Natural killer cell (primary cell): ENCODE measurements at regions of chr7 and their contacts with region 1.

Region 1: DNA sequence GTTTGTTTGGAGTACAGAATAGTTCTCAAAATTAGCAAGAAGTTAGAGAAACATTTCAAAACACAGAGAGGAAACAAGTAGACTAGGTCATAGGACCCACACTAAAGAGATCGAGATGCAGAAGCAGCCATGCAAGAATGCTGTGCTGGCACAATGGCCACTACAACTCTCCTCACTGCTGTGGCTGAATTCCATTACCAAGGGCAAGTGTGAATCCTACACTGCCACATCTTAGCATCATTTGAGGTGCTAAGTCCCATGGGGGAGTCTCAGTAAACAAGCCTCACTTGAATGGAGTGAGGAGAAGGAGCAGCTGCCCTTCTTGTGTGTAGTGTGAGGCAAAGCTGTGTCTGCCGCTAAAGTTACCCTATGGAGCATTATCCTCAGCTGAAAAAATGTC is 56.7 kb downstream of the PCLO start:
- DNase-seq: no peak
- ATAC-seq: no peak
- H3K4me3 ChIP-seq: no peak overlapping the region
- H3K4me3 Mint-ChIP-seq: no peak overlapping the region
- H3K27ac ChIP-seq: no peak overlapping the region
- H3K27ac Mint-ChIP-seq: no peak overlapping the region
- H3K4me1 ChIP-seq: no peaks in the 10 kb centered on the region
- H3K4me1 Mint-ChIP-seq: no peaks in the 10 kb centered on the region
- H3K27me3 ChIP-seq: no peaks in the 10 kb centered on the region
- H3K27me3 Mint-ChIP-seq: no peaks in the 10 kb centered on the region
- CTCF ChIP-seq: no peak

Region 2: DNA sequence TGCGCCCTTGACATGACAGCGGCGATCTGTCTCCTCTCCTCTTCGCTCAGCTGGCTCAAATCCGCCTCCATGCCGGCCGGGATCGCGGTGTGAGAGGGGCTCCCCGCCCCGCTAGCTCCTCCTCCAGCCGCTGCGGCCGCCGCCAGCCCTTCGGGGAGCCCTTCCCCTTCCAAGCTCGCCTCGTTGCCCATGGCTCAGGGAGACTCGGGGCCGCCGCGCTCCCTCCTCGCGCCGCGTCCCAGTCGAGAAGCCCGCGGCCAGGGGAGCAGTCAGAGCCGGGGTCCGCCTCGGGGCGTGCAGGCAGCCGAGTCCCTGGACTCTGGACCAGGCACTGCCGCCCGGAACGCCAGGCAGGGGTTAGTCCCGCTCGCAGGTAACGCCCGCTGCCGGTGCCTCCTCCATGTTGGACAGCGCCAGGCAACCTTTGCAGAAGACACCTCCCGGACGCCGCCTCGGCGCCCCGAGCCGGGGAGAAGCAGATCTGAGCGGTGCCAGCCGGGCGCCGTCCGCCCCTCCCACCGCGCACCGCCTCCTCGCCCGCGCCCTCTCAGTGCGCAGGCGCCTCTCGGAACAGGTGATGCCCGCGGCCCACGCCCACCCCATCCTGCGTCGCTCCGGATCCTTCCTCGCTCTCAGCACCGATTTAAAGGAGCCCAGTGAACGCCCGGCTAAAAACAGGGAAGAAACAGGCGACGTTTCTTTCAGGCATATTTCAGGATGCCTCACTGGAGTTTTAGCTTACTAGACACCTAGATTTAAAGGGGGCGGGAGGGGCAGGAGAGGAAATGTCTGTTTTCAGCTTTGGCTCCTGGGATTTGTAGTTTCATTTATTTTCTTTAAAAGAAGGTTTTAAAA is 56.7 kb after region 1 on chr7 and contains the start of gene PCLO:
- intact Hi-C with region 1: loop called (anchors 10 kb)
- DNase-seq: peak in 1 of 2 donors; percentile 27
- ATAC-seq: peak in 1 of 3 donors; percentile 34
- H3K4me3 ChIP-seq: no peak within 1 kb of the TSS
- H3K4me3 Mint-ChIP-seq: no peak within 1 kb of the TSS
- H3K27ac ChIP-seq: no peak within 1 kb of the TSS
- H3K27ac Mint-ChIP-seq: no peak within 1 kb of the TSS
- H3K4me1 ChIP-seq: no peaks in the 10 kb centered on the region
- H3K4me1 Mint-ChIP-seq: no peaks in the 10 kb centered on the region
- H3K27me3 ChIP-seq: no peaks in the 10 kb centered on the region
- H3K27me3 Mint-ChIP-seq: no peaks in the 10 kb centered on the region
- CTCF ChIP-seq: no peak
- total RNA-seq, gene PCLO: not detected

Region 3: DNA sequence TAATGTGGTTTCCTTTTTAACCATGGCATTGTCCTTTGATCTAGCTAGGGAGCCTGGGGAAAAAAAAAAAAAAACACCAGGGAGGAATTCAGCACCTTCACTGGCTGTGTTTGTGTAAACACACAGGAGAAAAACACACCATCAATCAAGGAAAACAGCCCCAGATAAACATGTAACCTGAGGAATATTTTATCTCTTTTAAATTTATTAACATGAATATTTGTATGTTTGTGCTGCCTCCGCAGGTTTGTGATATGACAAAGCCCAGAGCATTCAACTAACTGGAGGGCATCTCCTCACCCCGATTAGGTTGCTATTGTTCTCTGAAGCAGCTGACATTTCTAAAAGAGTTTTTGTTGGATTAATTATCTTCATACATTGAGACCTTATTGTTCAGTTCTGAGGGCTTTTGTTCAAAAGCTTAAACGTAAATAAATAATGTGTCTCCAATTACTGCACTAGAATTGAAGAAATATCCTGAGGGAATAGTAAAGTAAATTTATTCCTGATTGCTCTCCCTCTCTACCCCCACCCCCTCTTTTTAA is 632.4 kb after region 1 on chr7:
- intact Hi-C with region 1: no loop called
- DNase-seq: no peak
- ATAC-seq: no peak
- H3K4me3 ChIP-seq: no peak overlapping the region
- H3K4me3 Mint-ChIP-seq: no peak overlapping the region
- H3K27ac ChIP-seq: no peak overlapping the region
- H3K27ac Mint-ChIP-seq: no peak overlapping the region
- H3K4me1 ChIP-seq: no peaks in the 10 kb centered on the region
- H3K4me1 Mint-ChIP-seq: no peaks in the 10 kb centered on the region
- H3K27me3 ChIP-seq: no peaks in the 10 kb centered on the region
- H3K27me3 Mint-ChIP-seq: no peaks in the 10 kb centered on the region
- CTCF ChIP-seq: no peak